ENCODE measurements at regions of chr2 and their contacts with region 1.

Region 1: GRCh38 chr2:206159346-206160124 is at the starts of genes EEF1B2 and NDUFS1:
- DNase-seq: peak; percentile 88 to 97 (median 96)
- ATAC-seq: peak; percentile 94
- H3K4me3 ChIP-seq: peak within 1 kb of the TSS; percentile 95
- H3K4me3 Mint-ChIP-seq: peak within 1 kb of the TSS; percentile 95 to 100 (median 98)
- H3K27ac ChIP-seq: peak within 1 kb of the TSS; percentile 96
- H3K27ac Mint-ChIP-seq: peak within 1 kb of the TSS; percentile 97 to 99 (median 99)
- H3K4me1 ChIP-seq: peaks cover 19 to 29% of the 10 kb centered on the region in 2 donors
- H3K4me1 Mint-ChIP-seq: peaks cover 36 to 78% (median 62%) of the 10 kb centered on the region in 7 donors
- H3K27me3 ChIP-seq: no peaks in the 10 kb centered on the region
- H3K27me3 Mint-ChIP-seq: no peaks in the 10 kb centered on the region
- total RNA-seq, gene EEF1B2: 542 to 1,236 (median 1,148) TPM
- total RNA-seq, gene NDUFS1: 37.3 to 61.9 (median 56.3) TPM

Region 2: DNA sequence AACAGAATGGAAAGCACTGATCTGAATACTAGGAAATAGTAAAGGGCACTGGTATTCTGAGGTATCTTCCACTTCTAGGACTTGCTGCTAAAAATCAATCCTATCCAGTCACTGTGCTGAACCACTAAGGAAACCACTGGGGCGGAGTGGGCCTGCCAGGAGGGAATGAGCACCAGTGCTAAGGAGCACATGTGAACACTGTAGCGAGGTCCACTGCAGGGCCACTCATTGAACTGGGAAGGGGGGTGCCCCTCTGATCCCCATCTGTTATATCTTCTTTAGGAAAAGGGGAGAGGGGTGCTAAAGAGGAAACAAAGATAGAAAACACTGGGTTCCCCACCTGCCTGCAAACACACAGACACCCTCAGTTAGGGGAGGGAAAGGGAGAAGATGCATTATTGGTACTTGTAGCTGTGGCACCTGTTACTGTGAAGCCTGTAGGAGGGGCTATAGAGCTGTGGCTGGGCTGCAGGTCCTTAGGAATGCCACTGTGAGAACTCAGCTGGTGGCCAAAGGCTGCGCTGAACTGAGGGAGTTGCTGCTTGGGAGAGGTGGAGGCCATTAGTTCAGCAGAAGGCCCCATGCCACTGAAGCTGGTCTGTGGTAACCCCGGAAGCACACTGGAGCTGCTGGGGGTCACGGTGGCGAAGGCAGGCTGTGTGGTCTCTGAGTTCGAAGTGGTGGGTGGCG is 155.4 kb before region 1 on chr2:
- CTCF ChIA-PET with region 1: no interaction called
- POLR2A ChIA-PET with region 1: no interaction called
- intact Hi-C with region 1: loop called in 1 of 2 experiments (anchors 5 kb)
- DNase-seq: peak in 2 of 9 donors; percentile 5 to 10
- ATAC-seq: peak; percentile 34
- H3K4me3 ChIP-seq: no peak overlapping the region
- H3K4me3 Mint-ChIP-seq: no peak overlapping the region
- H3K27ac ChIP-seq: no peak overlapping the region
- H3K27ac Mint-ChIP-seq: peak overlapping the region in 1 of 9 donors; percentile 38
- H3K4me1 ChIP-seq: no peaks in the 10 kb centered on the region
- H3K4me1 Mint-ChIP-seq: peaks cover 0 to 12% (median 1%) of the 10 kb centered on the region in 7 donors
- H3K27me3 ChIP-seq: no peaks in the 10 kb centered on the region
- H3K27me3 Mint-ChIP-seq: no peaks in the 10 kb centered on the region

Region 3: DNA sequence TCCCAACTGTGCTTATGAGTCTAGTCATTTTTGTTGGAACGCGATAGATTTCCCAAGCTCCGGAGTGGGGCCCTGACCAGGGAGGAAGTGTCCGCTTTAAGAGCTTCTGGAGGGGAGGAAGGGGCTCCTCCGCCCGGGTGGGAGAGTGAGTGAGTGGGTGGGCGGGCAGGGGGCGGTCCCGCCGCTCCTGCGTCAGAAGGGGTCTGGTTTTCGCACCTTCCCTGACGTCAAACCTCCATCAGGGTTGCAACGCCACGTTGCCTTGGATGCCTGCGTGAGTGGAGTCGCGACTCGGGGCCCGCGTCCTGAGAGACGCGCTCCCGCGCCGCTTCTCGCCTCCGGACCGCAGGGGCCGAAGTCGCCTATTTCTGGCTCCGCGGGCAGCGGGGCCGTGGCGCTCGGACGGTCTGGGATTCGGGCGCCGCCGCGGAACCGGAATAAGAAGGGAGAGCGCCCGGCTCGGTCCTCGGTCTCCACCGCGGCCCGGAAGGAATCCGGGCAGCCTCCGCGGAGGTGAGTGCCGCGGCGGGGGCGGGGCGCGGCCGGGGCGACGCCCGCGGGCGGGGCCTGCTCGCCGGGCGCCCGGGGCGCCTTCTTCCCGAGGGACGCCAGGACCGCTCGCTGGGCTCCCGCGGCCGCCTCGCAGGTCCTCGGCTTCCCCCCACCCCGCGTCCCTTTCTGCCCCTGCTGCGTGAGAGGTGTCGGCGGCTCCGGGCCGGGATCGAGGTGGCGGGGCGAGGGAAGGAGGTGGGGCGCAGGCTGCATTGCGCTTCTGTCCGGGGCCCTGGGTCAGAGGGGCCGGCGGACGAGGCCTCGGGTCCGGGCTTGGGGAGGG is 115.1 kb after region 1 on chr2 and contains the start of gene ZDBF2:
- CTCF ChIA-PET with region 1: interaction called, 3 read pairs
- POLR2A ChIA-PET with region 1: interaction called, 3 read pairs
- intact Hi-C with region 1: loop called (anchors 1 kb)
- DNase-seq: peak; percentile 29 to 70 (median 62)
- ATAC-seq: peak; percentile 80
- H3K4me3 ChIP-seq: peak within 1 kb of the TSS; percentile 56
- H3K4me3 Mint-ChIP-seq: peak within 1 kb of the TSS; percentile 85 to 94 (median 91)
- H3K27ac ChIP-seq: peak within 1 kb of the TSS; percentile 79
- H3K27ac Mint-ChIP-seq: peak within 1 kb of the TSS; percentile 85 to 96 (median 94)
- H3K4me1 ChIP-seq: peaks cover 8 to 14% of the 10 kb centered on the region in 2 donors
- H3K4me1 Mint-ChIP-seq: peaks cover 9 to 25% (median 20%) of the 10 kb centered on the region in 7 donors
- H3K27me3 ChIP-seq: peaks cover 0 to 6% of the 10 kb centered on the region in 2 donors
- H3K27me3 Mint-ChIP-seq: peaks cover 14 to 69% (median 51%) of the 10 kb centered on the region in 5 donors
- total RNA-seq, gene ZDBF2: 9.1 to 22.4 (median 16.0) TPM

Region 4: DNA sequence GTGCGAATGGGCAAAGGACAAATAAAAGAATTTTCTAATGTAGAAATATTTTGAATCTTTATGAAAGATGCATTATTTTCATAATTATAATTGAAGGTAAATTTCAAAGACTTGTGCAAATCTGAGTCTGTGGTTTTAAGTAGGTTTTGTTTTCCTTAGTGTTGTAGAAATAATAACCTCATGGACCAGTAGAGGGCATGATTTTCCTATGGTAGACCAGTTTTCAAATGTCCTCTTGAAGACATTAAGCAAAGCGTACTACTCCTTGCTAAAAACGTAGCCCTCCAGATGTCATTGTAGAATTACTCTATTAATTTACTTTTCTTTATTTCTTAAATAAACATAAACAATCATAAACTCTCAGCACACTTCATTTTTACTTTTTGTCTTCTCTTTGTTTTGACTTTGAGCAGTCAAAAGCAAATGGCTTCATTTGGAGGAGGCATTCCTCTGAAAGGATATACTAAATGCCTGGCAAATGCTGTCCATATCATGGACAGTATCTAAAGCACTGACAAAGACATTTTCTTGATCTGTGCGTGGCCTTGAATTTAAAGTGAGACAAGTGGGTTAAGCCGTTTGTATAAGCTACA is 396.9 kb after region 1 on chr2:
- CTCF ChIA-PET with region 1: no interaction called
- POLR2A ChIA-PET with region 1: interaction called, 3 read pairs
- intact Hi-C with region 1: loop called (anchors 2 to 5 kb)
- DNase-seq: peak in 5 of 9 donors; percentile 4 to 45 (median 32)
- ATAC-seq: no peak
- H3K4me3 ChIP-seq: no peak overlapping the region
- H3K4me3 Mint-ChIP-seq: no peak overlapping the region
- H3K27ac ChIP-seq: no peak overlapping the region
- H3K27ac Mint-ChIP-seq: no peak overlapping the region
- H3K4me1 ChIP-seq: peaks cover 0 to 6% of the 10 kb centered on the region in 2 donors
- H3K4me1 Mint-ChIP-seq: peaks cover 1 to 37% (median 26%) of the 10 kb centered on the region in 7 donors
- H3K27me3 ChIP-seq: no peaks in the 10 kb centered on the region
- H3K27me3 Mint-ChIP-seq: peaks cover 5 to 29% (median 11%) of the 10 kb centered on the region in 5 donors

Region 5: GRCh38 chr2:207473049-207473930 is 1313.8 kb after region 1 on chr2:
- CTCF ChIA-PET with region 1: no interaction called
- POLR2A ChIA-PET with region 1: no interaction called
- intact Hi-C with region 1: loop called in 1 of 2 experiments (anchors 2 kb)
- DNase-seq: peak in 8 of 9 donors; percentile 25 to 68 (median 52)
- ATAC-seq: peak; percentile 76
- H3K4me3 ChIP-seq: no peak overlapping the region
- H3K4me3 Mint-ChIP-seq: peak overlapping the region in 4 of 10 donors; percentile 20 to 52 (median 42)
- H3K27ac ChIP-seq: no peak overlapping the region
- H3K27ac Mint-ChIP-seq: peak overlapping the region in 7 of 9 donors; percentile 14 to 71 (median 48)
- H3K4me1 ChIP-seq: no peaks in the 10 kb centered on the region
- H3K4me1 Mint-ChIP-seq: peaks cover 6 to 23% (median 18%) of the 10 kb centered on the region in 7 donors
- H3K27me3 ChIP-seq: no peaks in the 10 kb centered on the region
- H3K27me3 Mint-ChIP-seq: peaks cover 0 to 4% (median 0%) of the 10 kb centered on the region in 5 donors

Region 6: GRCh38 chr2:208025037-208025813 is 1865.7 kb after region 1 on chr2 and contains the start of gene PLEKHM3:
- CTCF ChIA-PET with region 1: no interaction called
- POLR2A ChIA-PET with region 1: no interaction called
- intact Hi-C with region 1: loop called in 1 of 2 experiments (anchors 5 kb)
- DNase-seq: peak; percentile 12 to 80 (median 62)
- ATAC-seq: peak; percentile 93
- H3K4me3 ChIP-seq: peak within 1 kb of the TSS; percentile 88
- H3K4me3 Mint-ChIP-seq: peak within 1 kb of the TSS; percentile 85 to 100 (median 96)
- H3K27ac ChIP-seq: peak within 1 kb of the TSS; percentile 76
- H3K27ac Mint-ChIP-seq: peak within 1 kb of the TSS; percentile 89 to 98 (median 94)
- H3K4me1 ChIP-seq: peaks cover 0 to 4% of the 10 kb centered on the region in 2 donors
- H3K4me1 Mint-ChIP-seq: peaks cover 12 to 34% (median 27%) of the 10 kb centered on the region in 7 donors
- H3K27me3 ChIP-seq: no peaks in the 10 kb centered on the region
- H3K27me3 Mint-ChIP-seq: no peaks in the 10 kb centered on the region
- total RNA-seq, gene PLEKHM3: 6.1 to 19.4 (median 15.5) TPM

Measured in naive thymus-derived CD4-positive, alpha-beta T cell (primary cell).